Activated B cell treated with CpG ODN at 0.5 μM for 24 hours (primary cell): ENCODE measurements at regions of chr12 and their contacts with region 1.

Region 1: GRCh38 chr12:9331218-9331626 is 123.0 kb upstream of the PZP start:
- DNase-seq: peak; percentile 65
- ATAC-seq: peak; percentile 96
- H3K4me3 Mint-ChIP-seq: no peak overlapping the region
- H3K27ac Mint-ChIP-seq: no peak overlapping the region
- H3K4me1 Mint-ChIP-seq: peaks cover 12% of the 10 kb centered on the region
- H3K27me3 Mint-ChIP-seq: no peaks in the 10 kb centered on the region
- CTCF ChIP-seq: peak; percentile 86

Region 2: GRCh38 chr12:9184276-9184675 is 146.9 kb before region 1 on chr12:
- CTCF ChIA-PET with region 1: no interaction called
- POLR2A ChIA-PET with region 1: no interaction called
- intact Hi-C with region 1: no loop called
- DNase-seq: no peak
- ATAC-seq: no peak
- H3K4me3 Mint-ChIP-seq: no peak overlapping the region
- H3K27ac Mint-ChIP-seq: no peak overlapping the region
- H3K4me1 Mint-ChIP-seq: no peaks in the 10 kb centered on the region
- H3K27me3 Mint-ChIP-seq: peaks cover 16% of the 10 kb centered on the region
- CTCF ChIP-seq: no peak

Region 3: GRCh38 chr12:9464408-9464807 is 133.2 kb after region 1 on chr12:
- CTCF ChIA-PET with region 1: interaction called, 8 read pairs
- POLR2A ChIA-PET with region 1: no interaction called
- intact Hi-C with region 1: loop called (anchors 1 kb)
- DNase-seq: no peak
- ATAC-seq: no peak
- H3K4me3 Mint-ChIP-seq: no peak overlapping the region
- H3K27ac Mint-ChIP-seq: no peak overlapping the region
- H3K4me1 Mint-ChIP-seq: peaks cover 3% of the 10 kb centered on the region
- H3K27me3 Mint-ChIP-seq: no peaks in the 10 kb centered on the region
- CTCF ChIP-seq: no peak

Region 4: GRCh38 chr12:9702255-9702654 is 371.0 kb after region 1 on chr12:
- CTCF ChIA-PET with region 1: no interaction called
- POLR2A ChIA-PET with region 1: no interaction called
- intact Hi-C with region 1: loop called (anchors 5 kb)
- DNase-seq: no peak
- ATAC-seq: peak; percentile 41
- H3K4me3 Mint-ChIP-seq: peak overlapping the region; percentile 65
- H3K27ac Mint-ChIP-seq: peak overlapping the region; percentile 85
- H3K4me1 Mint-ChIP-seq: peaks cover 85% of the 10 kb centered on the region
- H3K27me3 Mint-ChIP-seq: no peaks in the 10 kb centered on the region
- CTCF ChIP-seq: no peak

Region 5: GRCh38 chr12:9773216-9773877 is 442.1 kb after region 1 on chr12:
- CTCF ChIA-PET with region 1: no interaction called
- POLR2A ChIA-PET with region 1: no interaction called
- intact Hi-C with region 1: no loop called
- DNase-seq: no peak
- ATAC-seq: no peak
- H3K4me3 Mint-ChIP-seq: no peak overlapping the region
- H3K27ac Mint-ChIP-seq: no peak overlapping the region
- H3K4me1 Mint-ChIP-seq: peaks cover 27% of the 10 kb centered on the region
- H3K27me3 Mint-ChIP-seq: no peaks in the 10 kb centered on the region
- CTCF ChIP-seq: no peak

Region 6: GRCh38 chr12:9797722-9798619 is 466.7 kb after region 1 on chr12:
- CTCF ChIA-PET with region 1: interaction called, 16 read pairs
- POLR2A ChIA-PET with region 1: no interaction called
- intact Hi-C with region 1: loop called (anchors 1 kb)
- DNase-seq: no peak
- ATAC-seq: peak; percentile 96
- H3K4me3 Mint-ChIP-seq: no peak overlapping the region
- H3K27ac Mint-ChIP-seq: no peak overlapping the region
- H3K4me1 Mint-ChIP-seq: peaks cover 34% of the 10 kb centered on the region
- H3K27me3 Mint-ChIP-seq: no peaks in the 10 kb centered on the region
- CTCF ChIP-seq: no peak

Region 7: GRCh38 chr12:9925708-9926393 is 594.6 kb after region 1 on chr12:
- CTCF ChIA-PET with region 1: no interaction called
- POLR2A ChIA-PET with region 1: no interaction called
- intact Hi-C with region 1: loop called (anchors 1 kb)
- DNase-seq: no peak
- ATAC-seq: peak; percentile 40
- H3K4me3 Mint-ChIP-seq: peak overlapping the region; percentile 62
- H3K27ac Mint-ChIP-seq: no peak overlapping the region
- H3K4me1 Mint-ChIP-seq: peaks cover 4% of the 10 kb centered on the region
- H3K27me3 Mint-ChIP-seq: peaks cover 12% of the 10 kb centered on the region
- CTCF ChIP-seq: no peak